ENCODE measurements at regions of chr2 and their contacts with region 1.

Region 1: GRCh38 chr2:84424152-84424551 is 34.9 kb downstream of the SUCLG1 start:
- ATAC-seq: no peak
- H3K4me3 ChIP-seq: no peak overlapping the region
- H3K27ac ChIP-seq: no peak overlapping the region
- H3K4me1 ChIP-seq: no peaks in the 10 kb centered on the region

Region 2: GRCh38 chr2:84320940-84321339 is 103.2 kb before region 1 on chr2:
- in situ Hi-C with region 1: loop called in 1 of 9 experiments (anchors 10 kb)
- ATAC-seq: peak in 5 of 8 experiments; percentile 11 to 88 (median 53)
- H3K4me3 ChIP-seq: no peak overlapping the region
- H3K27ac ChIP-seq: no peak overlapping the region
- H3K4me1 ChIP-seq: no peaks in the 10 kb centered on the region

Measured in motor neuron (in vitro differentiated cells).